Cardiac septum (tissue), 1 donor: ENCODE measurements at regions of chr17 and their contacts with region 1.

Region 1: DNA sequence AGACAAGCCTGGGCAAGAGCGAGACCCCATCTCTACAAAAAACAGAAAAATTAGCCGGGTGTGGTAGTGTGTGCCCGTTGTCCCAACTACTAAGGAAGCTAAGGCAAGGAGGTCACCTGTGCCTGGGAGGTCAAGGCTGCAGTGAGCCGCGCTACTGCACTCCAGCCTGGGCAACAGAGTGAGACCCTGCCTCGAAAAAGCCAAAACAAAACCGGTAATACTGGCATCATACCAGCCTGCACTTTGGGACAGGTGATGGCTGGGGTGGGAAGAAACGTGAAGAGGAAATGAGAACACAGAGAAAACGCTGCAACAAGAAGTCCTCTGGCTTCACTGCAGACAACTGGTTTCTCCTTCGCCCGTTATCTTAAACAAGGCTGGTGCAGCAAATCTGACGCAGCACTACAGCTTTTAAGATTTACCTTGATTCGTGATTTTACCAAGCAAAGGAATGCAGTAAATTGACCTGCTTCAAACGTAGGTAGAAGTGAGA is 725 bp upstream of the CASC3 start:
- DNase-seq: no peak

Region 2: GRCh38 chr17:40121181-40122135 is 18.2 kb before region 1 on chr17 and contains the start of gene MSL1:
- intact Hi-C with region 1: loop called (anchors 1 kb)
- DNase-seq: peak; percentile 96
- total RNA-seq, gene MSL1: 53.7 TPM